MCF 10A (cell line): ENCODE measurements at regions of chr17 and their contacts with region 1.

Region 1: GRCh38 chr17:28951991-28952975 is 965 bp upstream of the PHF12 start:
- DNase-seq: peak; percentile 100
- H3K4me3 Mint-ChIP-seq: no peak overlapping the region
- H3K27ac Mint-ChIP-seq: no peak overlapping the region
- H3K4me1 Mint-ChIP-seq: peaks cover 6% of the 10 kb centered on the region
- H3K27me3 Mint-ChIP-seq: no peaks in the 10 kb centered on the region
- CTCF ChIP-seq: no peak

Region 2: GRCh38 chr17:28743225-28744103 is 208.8 kb before region 1 on chr17 and contains the start of gene TRAF4:
- CTCF ChIA-PET with region 1: no interaction called
- POLR2A ChIA-PET with region 1: interaction called, 20 read pairs
- intact Hi-C with region 1: no loop called
- DNase-seq: peak; percentile 97
- H3K4me3 Mint-ChIP-seq: peak within 1 kb of the TSS; percentile 91
- H3K27ac Mint-ChIP-seq: peak within 1 kb of the TSS; percentile 93
- H3K4me1 Mint-ChIP-seq: peaks cover 13% of the 10 kb centered on the region
- H3K27me3 Mint-ChIP-seq: no peaks in the 10 kb centered on the region
- CTCF ChIP-seq: no peak
- total RNA-seq, gene TRAF4: 106 and 126 TPM in 2 replicates

Region 3: DNA sequence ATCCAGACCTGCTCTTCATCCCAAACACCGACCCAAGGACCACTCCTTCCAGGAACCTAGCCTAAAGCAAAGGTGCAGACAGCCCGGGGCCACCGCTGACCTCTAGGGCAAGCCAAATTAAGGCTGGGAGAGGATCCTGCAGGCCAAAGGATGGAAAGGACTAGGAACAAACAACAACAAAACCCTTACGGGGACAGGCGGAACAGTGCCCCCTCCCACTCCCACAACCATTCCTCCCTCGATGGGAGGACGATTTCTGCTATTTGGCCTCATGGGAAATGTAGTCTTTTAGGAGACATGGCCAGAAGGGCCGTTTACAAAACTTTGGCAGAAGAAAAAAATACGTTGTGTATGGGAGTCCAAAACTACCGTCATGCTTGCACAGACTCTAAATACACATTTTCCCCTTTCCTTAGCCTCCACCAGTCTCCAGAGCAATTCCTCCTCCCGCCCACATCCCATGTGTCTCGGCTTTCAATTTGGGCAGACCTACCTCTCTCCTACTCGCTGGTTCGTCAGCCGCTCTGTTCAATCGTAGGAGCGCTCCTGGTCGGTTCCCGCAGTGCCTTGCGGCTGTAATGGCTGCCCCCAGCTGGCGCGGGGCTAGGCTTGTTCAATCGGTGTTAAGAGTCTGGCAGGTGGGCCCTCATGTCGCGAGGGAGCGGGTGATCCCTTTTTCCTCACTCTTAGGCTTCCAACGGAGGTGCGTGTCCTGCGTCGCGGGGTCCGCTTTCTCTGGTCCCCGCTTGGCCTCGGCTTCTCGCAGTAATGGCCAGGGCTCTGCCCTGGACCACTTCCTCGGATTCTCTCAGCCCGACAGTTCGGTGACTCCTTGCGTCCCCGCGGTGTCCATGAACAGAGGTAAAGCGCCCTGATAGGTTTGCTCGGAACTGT is 97.6 kb before region 1 on chr17 and contains the start of gene ERAL1:
- CTCF ChIA-PET with region 1: no interaction called
- POLR2A ChIA-PET with region 1: no interaction called
- intact Hi-C with region 1: loop called (anchors 10 kb)
- DNase-seq: peak; percentile 93
- H3K4me3 Mint-ChIP-seq: peak within 1 kb of the TSS; percentile 90
- H3K27ac Mint-ChIP-seq: peak within 1 kb of the TSS; percentile 87
- H3K4me1 Mint-ChIP-seq: no peaks in the 10 kb centered on the region
- H3K27me3 Mint-ChIP-seq: no peaks in the 10 kb centered on the region
- CTCF ChIP-seq: no peak
- total RNA-seq, gene ERAL1: 51.6 and 53.7 TPM in 2 replicates

Region 4: DNA sequence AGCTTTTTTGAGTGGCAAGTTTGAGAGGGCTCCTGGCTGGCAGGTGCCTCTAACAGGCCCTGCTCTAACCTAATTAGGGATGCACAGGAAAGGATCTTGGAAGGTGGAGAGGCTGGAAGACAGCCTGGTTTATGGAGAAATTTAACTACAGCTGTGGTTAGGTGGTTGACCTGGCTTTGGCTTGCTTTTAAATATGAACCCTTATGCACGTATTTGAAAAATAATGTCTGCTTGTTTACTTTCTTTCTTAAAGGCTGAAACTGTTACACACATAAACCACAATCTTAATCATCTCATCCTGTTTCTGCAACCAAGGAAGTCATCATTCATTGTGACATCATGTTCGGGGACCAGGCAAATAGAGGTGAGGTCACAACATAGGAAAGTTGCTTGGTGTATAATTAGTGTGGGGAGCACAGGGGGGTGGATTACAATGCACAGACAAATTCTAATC is 26.3 kb before region 1 on chr17:
- CTCF ChIA-PET with region 1: interaction called, 7 read pairs
- POLR2A ChIA-PET with region 1: interaction called, 17 read pairs
- intact Hi-C with region 1: no loop called
- DNase-seq: peak; percentile 88
- H3K4me3 Mint-ChIP-seq: no peak overlapping the region
- H3K27ac Mint-ChIP-seq: peak overlapping the region; percentile 62
- H3K4me1 Mint-ChIP-seq: peaks cover 20% of the 10 kb centered on the region
- H3K27me3 Mint-ChIP-seq: no peaks in the 10 kb centered on the region
- CTCF ChIP-seq: no peak

Region 5: GRCh38 chr17:29116804-29117772 is 164.8 kb after region 1 on chr17:
- CTCF ChIA-PET with region 1: interaction called, 279 read pairs
- POLR2A ChIA-PET with region 1: interaction called, 7 read pairs
- intact Hi-C with region 1: no loop called
- DNase-seq: peak; percentile 68
- H3K4me3 Mint-ChIP-seq: no peak overlapping the region
- H3K27ac Mint-ChIP-seq: no peak overlapping the region
- H3K4me1 Mint-ChIP-seq: no peaks in the 10 kb centered on the region
- H3K27me3 Mint-ChIP-seq: no peaks in the 10 kb centered on the region
- CTCF ChIP-seq: peak; percentile 90